ENCODE measurements at regions of chr15 and their contacts with region 1.

Region 1: DNA sequence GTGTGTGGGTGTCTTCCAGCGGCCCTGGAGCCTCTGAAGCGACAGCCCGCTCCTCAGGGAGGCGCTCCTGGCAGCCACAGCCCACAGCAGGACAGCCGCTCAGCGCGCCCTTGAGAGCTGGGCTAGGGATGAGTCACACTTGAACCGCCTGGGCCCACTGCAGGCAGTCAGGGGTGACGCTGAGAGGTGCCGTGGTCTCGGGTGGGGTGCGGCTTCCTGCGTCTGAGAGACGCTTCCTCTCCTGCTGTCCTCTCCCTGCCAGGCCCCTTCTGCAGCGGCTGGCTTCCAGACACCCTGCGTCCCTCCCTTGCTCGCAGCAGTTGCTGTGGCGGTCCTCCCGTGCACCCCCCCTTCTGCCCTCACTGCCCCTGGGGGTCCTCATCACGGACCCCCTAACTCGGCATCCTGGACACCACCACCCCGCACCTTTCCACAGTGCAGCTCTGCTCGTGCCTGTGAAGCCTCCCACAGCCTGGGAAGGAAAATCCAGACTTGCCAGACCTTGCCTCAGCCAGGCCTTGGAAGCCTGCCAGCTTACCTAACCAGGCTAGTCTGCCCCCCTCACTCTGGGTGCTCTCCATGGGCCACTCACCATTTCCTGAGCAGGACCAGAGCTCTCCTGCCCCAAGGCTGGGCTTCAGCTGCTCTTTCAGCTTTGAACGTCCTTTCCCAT is 1.1 kb upstream of the SPTBN5 start:
- DNase-seq: peak; percentile 84
- ATAC-seq: peak; percentile 100
- H3K4me3 Mint-ChIP-seq: peak overlapping the region; percentile 77
- H3K27ac Mint-ChIP-seq: peak overlapping the region; percentile 95
- H3K4me1 Mint-ChIP-seq: peaks cover 18% of the 10 kb centered on the region
- H3K27me3 Mint-ChIP-seq: no peaks in the 10 kb centered on the region

Region 2: GRCh38 chr15:41756198-41756597 is 138.7 kb before region 1 on chr15:
- POLR2A ChIA-PET with region 1: no interaction called
- DNase-seq: no peak
- ATAC-seq: no peak
- H3K4me3 Mint-ChIP-seq: no peak overlapping the region
- H3K27ac Mint-ChIP-seq: no peak overlapping the region
- H3K4me1 Mint-ChIP-seq: peaks cover 4% of the 10 kb centered on the region
- H3K27me3 Mint-ChIP-seq: no peaks in the 10 kb centered on the region

Region 3: GRCh38 chr15:41855261-41855961 is 39.5 kb before region 1 on chr15:
- POLR2A ChIA-PET with region 1: no interaction called
- DNase-seq: no peak
- ATAC-seq: no peak
- H3K4me3 Mint-ChIP-seq: no peak overlapping the region
- H3K27ac Mint-ChIP-seq: no peak overlapping the region
- H3K4me1 Mint-ChIP-seq: peaks cover 7% of the 10 kb centered on the region
- H3K27me3 Mint-ChIP-seq: peaks cover 1% of the 10 kb centered on the region

Region 4: DNA sequence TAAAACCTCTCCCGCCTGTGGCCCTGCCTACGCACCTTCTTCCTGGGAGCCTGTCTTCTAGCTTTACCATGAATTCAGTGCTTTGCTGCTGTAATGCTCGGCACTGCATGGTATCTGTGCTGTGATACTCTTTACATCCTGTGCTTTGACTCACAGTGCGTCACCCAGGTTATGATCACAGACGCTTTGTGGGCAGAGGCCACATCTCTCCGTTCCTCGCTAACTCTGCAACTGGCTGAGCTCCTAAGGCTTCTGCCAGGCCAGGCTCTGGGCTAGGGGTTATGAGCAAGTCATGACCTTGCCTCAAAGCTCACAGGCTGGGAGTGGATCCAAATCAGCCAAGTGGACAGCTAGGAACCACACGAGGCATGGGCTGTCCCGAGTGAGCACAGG is 24.2 kb before region 1 on chr15:
- POLR2A ChIA-PET with region 1: interaction called, 11 read pairs
- DNase-seq: peak; percentile 50
- ATAC-seq: peak; percentile 97
- H3K4me3 Mint-ChIP-seq: peak overlapping the region; percentile 29
- H3K27ac Mint-ChIP-seq: peak overlapping the region; percentile 89
- H3K4me1 Mint-ChIP-seq: peaks cover 7% of the 10 kb centered on the region
- H3K27me3 Mint-ChIP-seq: no peaks in the 10 kb centered on the region

Region 5: DNA sequence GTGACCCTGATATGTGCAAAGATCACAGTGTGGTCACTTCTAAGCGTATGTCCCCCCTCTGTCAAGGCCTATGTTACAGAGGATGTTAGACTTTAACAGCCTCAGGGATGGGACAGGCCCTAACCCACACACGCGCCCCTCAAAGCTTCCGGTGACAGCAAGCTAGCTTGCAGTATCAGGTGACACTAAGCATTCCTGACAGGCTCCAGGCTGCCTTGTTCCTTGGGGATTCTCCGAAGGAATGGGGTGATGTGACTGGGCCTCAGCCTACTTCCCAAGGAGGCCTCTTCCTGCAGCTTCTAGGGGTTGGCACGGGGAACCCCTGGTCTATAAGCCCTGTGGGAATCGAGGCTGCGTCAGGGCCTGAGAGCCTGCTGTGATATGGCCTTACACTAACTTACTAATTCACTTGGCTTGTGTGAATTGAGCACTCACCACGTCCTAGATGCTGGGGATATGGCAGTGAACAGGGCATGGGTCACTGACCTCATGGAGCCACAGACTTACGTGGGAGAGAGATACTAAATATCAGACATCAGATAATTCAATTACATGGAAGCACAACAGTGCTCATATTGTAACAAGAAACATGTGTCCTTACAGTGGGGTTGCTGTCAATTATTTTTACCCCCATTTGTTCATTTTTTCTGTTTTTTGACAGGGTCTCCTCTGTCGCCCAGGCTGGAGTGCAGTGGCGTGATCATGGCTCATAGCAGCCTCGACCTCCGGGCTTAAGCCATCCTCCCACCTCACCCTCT is 10.3 kb after region 1 on chr15:
- POLR2A ChIA-PET with region 1: no interaction called
- DNase-seq: no peak
- ATAC-seq: peak; percentile 19
- H3K4me3 Mint-ChIP-seq: no peak overlapping the region
- H3K27ac Mint-ChIP-seq: peak overlapping the region; percentile 37
- H3K4me1 Mint-ChIP-seq: peaks cover 4% of the 10 kb centered on the region
- H3K27me3 Mint-ChIP-seq: no peaks in the 10 kb centered on the region

Region 6: DNA sequence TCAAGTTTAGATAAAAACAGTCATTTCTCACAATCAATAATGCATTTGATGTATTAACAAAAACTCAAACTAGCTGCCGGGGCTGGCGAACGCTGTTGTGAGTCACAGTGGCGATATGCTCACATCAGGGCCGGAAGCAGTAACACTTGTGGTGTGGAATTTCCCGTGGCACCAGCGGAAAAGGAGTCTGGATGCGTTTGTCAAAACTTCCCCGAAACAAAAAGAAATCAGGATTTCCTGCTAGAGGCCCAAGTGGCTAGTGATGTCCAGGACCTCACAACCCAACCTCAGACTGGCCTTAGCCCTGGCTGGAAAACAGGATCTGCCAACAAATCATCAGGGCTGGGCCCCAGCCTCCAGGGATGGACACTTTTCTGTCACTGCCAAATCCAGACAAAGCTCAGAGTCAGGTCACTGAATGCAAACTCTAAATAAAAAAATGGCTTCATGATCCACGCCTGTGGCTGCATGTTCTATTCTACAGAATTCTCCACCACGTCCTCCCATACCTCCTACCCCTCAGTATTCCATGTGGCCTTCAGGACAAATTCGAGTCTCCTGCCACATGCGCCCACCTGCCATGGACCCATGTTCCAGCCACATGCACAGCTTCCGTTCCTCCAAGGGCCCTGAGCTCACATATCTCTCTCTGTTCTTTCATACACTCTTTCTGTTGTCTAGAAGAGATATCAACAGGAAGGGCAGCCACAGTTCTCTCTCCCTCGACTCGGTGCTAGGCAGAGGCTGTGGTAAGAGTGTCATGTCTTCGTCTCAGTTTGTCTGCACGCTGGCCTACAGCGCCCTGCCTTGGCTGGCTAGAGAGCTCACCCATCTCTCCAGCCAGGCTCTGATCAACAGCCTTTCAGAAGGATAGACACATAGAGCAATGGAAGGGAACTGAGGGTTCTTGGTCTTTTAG is 42.0 kb after region 1 on chr15:
- POLR2A ChIA-PET with region 1: interaction called, 19 read pairs
- DNase-seq: peak; percentile 60
- ATAC-seq: peak; percentile 90
- H3K4me3 Mint-ChIP-seq: peak overlapping the region; percentile 83
- H3K27ac Mint-ChIP-seq: peak overlapping the region; percentile 99
- H3K4me1 Mint-ChIP-seq: peaks cover 41% of the 10 kb centered on the region
- H3K27me3 Mint-ChIP-seq: no peaks in the 10 kb centered on the region

Region 7: DNA sequence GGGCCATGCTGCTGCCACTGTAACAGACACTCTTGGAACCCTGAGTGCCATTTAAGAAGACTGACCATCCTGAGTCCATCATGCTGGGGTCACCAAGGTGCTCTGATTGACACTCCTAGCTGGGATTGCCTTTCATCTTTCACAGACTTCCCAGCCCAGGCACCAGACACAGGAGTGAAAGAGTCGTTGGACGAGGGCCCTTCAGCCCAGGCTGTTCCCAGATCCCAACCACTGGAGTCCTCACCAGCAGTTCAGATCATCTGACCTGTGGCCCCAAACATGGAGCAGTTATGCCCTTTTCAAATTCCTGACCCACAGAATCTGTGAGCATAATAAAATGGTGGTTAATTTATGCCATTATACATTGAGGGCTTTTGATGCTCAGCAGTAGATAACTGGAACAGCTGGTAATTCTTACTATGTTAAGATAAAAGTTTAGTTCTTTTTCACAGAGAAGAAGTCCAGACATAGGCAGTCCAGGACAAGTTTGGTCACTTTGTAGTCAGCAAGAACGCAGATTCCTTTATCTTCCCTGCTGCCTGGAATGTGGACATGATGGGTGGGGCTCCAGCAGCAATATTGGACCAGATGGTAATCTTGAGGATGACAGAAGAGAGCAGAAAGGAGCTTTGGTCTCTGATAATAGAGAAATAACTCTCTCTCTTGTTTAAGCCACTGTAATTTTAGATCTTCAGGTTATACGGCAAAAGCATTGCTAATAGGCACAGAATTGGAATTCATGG is 84.8 kb after region 1 on chr15:
- POLR2A ChIA-PET with region 1: no interaction called
- DNase-seq: no peak
- ATAC-seq: no peak
- H3K4me3 Mint-ChIP-seq: no peak overlapping the region
- H3K27ac Mint-ChIP-seq: no peak overlapping the region
- H3K4me1 Mint-ChIP-seq: peaks cover 14% of the 10 kb centered on the region
- H3K27me3 Mint-ChIP-seq: peaks cover 32% of the 10 kb centered on the region